ENCODE measurements at regions of chr9 and their contacts with region 1.

Region 1: DNA sequence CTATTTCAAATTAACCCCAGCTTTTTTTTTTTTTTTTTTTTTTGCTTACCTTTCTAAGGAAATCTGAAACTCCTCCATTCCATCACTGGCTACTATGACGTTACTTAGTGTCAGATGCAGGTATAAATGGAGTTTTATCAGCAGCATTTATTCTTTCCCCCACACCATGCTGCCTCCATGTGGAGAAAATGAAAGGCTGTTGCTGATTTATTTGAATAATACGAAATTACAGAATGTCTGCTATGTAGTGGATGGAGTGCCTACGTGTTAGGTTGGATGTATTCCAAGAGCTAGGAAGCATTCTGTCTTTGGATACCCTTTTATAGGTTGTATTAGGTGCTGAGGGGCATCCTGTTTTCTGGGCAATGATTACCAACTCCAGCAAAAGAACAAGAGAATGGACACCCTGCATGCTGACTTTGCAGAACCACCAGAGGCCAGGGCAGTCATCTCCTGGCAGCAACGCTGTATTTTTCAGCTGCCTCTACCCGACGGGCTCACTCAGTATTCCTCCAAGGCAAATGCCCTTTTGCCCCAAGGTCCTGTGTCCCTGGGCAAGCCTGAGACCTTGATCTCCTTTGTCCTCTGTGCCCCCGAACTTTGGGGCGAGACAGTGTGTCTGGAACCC is 199.5 kb downstream of the ALDH1A1 start:
- H3K4me3 Mint-ChIP-seq: no peak overlapping the region
- H3K27ac Mint-ChIP-seq: no peak overlapping the region
- H3K4me1 Mint-ChIP-seq: no peaks in the 10 kb centered on the region
- H3K27me3 Mint-ChIP-seq: peaks cover 12% of the 10 kb centered on the region

Region 2: GRCh38 chr9:72280913-72281500 is 472.4 kb before region 1 on chr9:
- intact Hi-C with region 1: loop called (anchors 5 kb)
- H3K4me3 Mint-ChIP-seq: no peak overlapping the region
- H3K27ac Mint-ChIP-seq: no peak overlapping the region
- H3K4me1 Mint-ChIP-seq: peaks cover 6% of the 10 kb centered on the region
- H3K27me3 Mint-ChIP-seq: no peaks in the 10 kb centered on the region

Region 3: DNA sequence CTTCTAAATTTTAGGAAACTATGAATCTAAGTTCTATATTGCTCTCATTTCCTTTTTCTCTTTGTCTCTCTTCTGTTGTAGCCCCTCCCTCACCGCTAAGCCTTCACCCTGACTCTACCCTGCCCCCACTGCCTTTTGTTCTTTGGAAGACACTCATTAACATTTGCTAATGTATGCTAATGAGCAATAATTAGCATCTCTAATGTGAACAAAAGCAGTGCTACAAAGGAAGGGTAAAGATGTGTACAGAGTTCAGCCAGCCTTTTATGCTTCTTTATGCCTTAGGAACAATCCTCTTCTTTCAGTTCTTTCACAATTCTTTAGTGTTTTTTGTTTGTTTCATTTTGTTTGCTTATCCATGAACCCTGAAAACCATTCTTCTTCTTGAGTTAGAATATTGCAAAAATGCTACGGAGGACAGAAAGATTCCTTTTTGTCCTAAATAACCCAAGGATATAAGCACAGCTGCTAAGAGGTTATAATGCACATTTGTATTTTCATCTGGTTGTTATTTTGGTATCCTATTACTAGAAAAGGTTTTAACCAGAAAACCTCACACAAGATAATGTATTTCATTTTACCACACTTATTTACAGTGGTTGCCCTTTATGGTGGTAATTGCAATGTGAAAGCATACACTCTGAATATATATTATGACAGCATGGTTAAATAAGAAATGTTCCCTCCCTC is 72.6 kb before region 1 on chr9:
- intact Hi-C with region 1: loop called (anchors 10 kb)
- H3K4me3 Mint-ChIP-seq: no peak overlapping the region
- H3K27ac Mint-ChIP-seq: no peak overlapping the region
- H3K4me1 Mint-ChIP-seq: peaks cover 5% of the 10 kb centered on the region
- H3K27me3 Mint-ChIP-seq: peaks cover 27% of the 10 kb centered on the region

Region 4: DNA sequence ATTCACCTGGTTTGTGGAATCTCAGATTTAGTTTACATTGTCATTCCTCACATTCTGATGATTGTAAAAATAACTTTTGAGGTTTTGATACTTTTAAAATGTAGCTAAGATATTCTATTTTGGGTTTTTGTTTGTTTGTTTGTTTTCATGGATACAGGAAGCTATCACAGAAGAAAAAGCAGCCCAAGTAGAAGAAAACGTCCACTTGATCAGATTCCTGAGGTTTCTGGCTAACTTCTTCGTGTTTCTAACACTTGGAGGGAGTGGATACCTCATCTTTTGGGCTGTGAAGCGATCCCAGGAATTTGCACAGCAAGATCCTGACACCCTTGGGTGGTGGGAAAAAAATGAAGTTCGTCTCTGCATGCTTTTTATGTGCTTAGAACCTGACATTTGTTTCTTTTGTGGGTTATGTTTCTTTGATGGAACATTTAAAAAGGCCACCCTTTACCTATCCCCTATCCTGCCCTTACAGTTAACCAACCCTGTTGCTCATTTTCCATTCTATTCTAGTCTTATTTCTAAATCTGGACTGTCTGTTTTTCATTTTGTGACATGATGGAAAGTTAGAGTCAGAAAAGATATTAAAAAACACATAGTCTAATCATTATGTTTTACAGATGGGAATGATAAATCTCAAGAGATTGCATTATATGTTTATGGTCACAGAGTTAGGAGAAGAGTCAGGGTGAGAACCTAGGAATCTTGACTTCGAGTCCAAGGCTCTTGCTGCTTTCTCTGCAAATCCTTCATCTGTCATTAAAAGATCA is 35.8 kb after region 1 on chr9:
- intact Hi-C with region 1: no loop called
- H3K4me3 Mint-ChIP-seq: no peak overlapping the region
- H3K27ac Mint-ChIP-seq: no peak overlapping the region
- H3K4me1 Mint-ChIP-seq: no peaks in the 10 kb centered on the region
- H3K27me3 Mint-ChIP-seq: peaks cover under 1% of the 10 kb centered on the region